Left colon (tissue), 2 donors: ENCODE measurements at regions of chr6 and their contacts with region 1.

Region 1: DNA sequence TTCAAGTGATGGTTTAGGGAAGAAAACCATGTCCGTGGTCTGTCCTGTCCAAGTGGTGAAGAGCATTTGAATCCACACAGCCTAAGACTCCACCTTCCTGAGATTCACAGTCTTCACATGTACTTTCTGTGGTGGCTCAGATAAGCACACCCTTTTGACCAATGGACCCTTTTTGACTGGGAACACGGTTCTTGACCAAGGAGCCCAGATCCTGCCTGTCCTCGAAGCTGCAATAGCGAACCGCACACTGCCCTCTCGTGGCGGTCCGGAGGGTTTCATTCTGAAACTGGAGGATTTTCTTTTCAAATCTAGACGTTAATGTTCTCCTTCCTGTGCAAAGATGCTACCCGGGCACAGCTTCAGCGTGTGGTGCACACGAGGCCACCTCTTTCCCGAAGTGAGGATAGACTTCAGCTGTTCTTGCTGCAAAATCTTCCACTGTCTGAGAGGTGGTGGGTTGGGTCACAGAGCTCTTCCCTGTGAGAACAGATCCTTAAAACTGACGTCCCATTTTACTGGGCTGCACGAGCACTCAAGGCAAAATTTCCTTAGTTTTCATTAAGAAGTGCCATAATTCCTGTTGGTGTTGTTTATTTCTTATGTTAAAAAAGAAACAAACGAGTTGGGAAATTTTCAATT is 90.5 kb downstream of the SYNJ2 start:
- DNase-seq: peak; percentile 56 to 74
- ATAC-seq: peak; percentile 53

Region 2: DNA sequence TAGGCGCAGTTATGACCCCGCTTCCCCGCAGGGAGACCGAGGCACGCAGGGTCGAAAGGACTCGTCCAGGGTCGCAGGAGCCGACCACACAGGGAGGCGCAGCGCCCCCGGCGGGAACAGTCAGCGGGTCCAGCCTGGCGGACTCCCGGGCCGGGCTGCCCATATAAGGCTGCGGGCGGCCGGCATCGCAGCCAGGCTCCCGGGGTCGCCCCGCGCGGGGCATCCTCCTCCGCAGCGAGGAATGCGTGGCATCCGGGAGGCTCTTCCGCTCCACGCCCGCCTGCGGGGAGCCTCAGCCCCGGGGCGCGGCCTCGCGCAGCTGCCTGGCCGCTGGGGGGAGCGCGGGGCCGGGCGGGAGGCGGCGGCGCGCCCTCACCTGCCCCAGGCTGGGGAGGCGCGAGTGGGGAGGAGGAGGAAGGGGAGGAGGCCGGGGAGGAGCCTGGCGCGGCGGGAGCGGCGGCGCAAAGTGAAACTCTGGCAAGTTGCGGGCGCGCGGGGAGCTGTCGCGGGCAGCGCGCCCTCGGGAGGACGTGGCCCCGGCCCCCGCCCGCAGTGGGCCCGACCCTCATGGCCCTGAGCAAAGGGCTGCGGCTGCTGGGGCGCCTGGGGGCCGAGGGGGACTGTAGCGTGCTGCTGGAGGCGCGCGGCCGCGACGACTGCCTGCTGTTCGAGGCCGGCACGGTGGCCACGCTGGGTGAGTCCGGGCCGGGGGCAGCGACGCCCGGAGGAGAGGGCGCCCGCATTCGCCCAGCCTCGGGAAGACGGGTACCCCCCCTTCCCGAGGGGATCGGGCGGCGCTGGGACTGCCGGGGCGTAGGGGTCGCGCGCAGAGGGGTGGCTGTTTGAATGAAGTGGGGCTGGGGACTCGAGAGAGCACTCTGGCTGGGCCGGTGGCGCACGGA is 90.6 kb before region 1 on chr6 and contains the start of gene SYNJ2:
- intact Hi-C with region 1: loop called in 1 of 2 experiments (anchors 10 kb)
- DNase-seq: peak; percentile 88 to 89
- ATAC-seq: peak; percentile 88
- total RNA-seq, gene SYNJ2: 35.4 to 50.1 TPM

Region 3: DNA sequence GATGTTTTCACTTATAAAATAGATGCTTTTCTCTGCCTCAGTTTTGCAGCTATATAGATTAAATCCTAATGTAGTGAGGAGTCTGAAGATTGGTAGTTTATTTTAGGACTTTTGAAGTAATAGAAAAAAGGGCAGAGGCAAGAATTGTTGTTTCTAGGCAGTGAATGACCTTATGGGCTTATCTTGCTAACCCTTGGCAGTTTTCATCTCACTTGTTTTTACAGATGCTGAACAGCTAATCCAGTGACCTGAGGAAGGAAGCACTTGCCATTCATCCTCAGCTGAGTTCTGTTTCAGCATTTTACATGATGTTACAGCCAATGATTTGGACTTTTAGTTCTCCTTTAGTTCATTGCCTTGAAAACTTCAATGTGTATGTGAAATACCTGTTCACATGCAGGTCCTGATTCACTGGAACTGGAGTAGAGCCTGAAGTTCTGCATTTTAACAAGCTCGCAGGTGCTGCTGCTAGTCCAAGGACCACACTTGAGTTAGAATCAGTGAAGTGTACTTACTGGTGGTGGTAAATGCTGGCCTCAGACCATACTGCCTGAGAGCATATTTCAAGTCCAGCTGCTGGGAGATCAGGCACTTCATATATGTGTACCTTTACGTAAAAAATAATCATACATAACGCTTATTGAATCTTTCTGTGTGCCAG is 327.0 kb after region 1 on chr6:
- intact Hi-C with region 1: no loop called
- DNase-seq: no peak
- ATAC-seq: no peak

Region 4: GRCh38 chr6:158611541-158612370 is 539.6 kb after region 1 on chr6:
- intact Hi-C with region 1: no loop called
- DNase-seq: no peak
- ATAC-seq: peak; percentile 33